Ascending aorta (tissue), 2 donors: ENCODE measurements at regions of chr2 and their contacts with region 1.

Region 1: GRCh38 chr2:37570773-37571586 is 100.5 kb downstream of the CDC42EP3 start:
- DNase-seq: peak in 1 of 2 donors; percentile 68
- H3K4me3 ChIP-seq: no peak overlapping the region
- H3K27ac ChIP-seq: peak overlapping the region in 1 of 2 donors; percentile 71
- H3K4me1 ChIP-seq: peaks cover 8 to 21% of the 10 kb centered on the region in 2 donors
- H3K27me3 ChIP-seq: no peaks in the 10 kb centered on the region
- CTCF ChIP-seq: no peak

Region 2: DNA sequence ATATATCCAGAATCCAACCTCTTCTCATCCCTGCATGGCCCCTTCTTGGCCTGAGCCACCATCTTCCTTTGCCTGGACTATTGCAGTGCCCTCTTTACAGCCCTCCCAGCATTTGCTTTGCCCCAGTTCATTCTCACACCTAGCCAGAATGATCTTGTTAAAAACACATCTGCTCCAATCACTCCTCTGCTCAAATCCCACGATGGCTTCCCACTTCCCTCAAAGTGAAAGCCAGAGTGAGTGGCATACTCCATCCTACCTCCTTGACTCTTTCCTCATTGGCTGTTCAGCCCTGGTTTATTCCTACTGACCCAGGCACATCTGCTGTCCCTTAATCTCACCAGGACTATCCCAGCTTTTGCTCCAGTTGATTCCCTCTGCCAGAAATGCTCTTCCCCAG is 397.2 kb before region 1 on chr2:
- intact Hi-C with region 1: no loop called
- DNase-seq: no peak
- H3K4me3 ChIP-seq: no peak overlapping the region
- H3K27ac ChIP-seq: no peak overlapping the region
- H3K4me1 ChIP-seq: no peaks in the 10 kb centered on the region
- H3K27me3 ChIP-seq: no peaks in the 10 kb centered on the region
- CTCF ChIP-seq: no peak

Region 3: GRCh38 chr2:37244017-37244416 is 327.0 kb before region 1 on chr2:
- intact Hi-C with region 1: no loop called
- DNase-seq: no peak
- H3K4me3 ChIP-seq: no peak overlapping the region
- H3K27ac ChIP-seq: no peak overlapping the region
- H3K4me1 ChIP-seq: no peaks in the 10 kb centered on the region
- H3K27me3 ChIP-seq: no peaks in the 10 kb centered on the region
- CTCF ChIP-seq: no peak

Region 4: GRCh38 chr2:37526321-37526720 is 44.7 kb before region 1 on chr2:
- intact Hi-C with region 1: loop called (anchors 5 kb)
- DNase-seq: no peak
- H3K4me3 ChIP-seq: no peak overlapping the region
- H3K27ac ChIP-seq: no peak overlapping the region
- H3K4me1 ChIP-seq: peaks cover 0 to 19% of the 10 kb centered on the region in 2 donors
- H3K27me3 ChIP-seq: no peaks in the 10 kb centered on the region
- CTCF ChIP-seq: no peak